ENCODE measurements at regions of chr14 and their contacts with region 1.

Region 1: DNA sequence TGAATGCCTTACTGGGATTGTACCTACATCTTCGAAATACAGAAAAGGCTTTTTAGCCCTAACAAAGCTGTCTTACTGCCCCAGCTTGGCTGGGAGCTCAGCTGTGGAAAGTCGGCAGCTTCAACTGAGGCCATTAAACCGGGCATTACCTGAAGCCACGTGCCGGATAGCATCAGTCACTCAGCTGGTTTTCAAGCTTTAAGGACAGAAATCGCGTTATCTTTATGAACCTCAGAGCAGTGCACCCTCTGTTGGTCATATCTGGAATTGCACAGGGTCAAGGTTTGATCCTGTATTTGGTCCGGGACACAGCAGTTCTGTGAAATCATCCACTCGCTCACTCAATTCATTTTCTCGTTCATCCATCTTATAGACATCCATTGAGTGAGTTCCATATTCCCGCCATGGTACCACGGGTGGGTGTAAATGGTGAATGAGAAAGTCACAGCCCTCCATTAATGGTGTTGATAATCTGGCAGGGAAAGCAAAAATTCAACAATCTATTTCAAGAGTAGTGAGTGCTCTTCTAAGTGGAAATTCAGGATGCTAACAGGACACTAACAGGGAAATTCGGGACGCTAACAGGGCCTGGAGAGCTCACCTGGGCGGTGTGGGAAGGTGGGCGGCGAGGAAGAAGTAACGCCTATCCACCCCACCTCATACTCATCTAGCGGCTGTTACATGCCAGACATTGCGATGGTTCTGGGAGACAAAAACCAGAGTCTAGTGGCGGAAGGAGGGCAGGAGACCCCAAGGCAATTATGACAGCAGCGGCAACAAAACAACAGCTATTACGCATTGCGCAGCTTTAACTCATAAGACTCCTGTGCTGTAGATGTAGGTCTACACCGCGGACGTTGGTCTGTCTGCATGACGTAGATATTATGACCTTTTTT is 60.6 kb upstream of the TCL1A start:
- DNase-seq: peak; percentile 71
- ATAC-seq: no peak
- H3K4me3 ChIP-seq: no peak overlapping the region
- H3K27ac ChIP-seq: no peak overlapping the region
- H3K4me1 ChIP-seq: no peaks in the 10 kb centered on the region
- H3K27me3 ChIP-seq: 0 out of 2 replicates have a peak, but pooled peaks cover 5% of the 10 kb centered on the region
- CTCF ChIP-seq: peak; percentile 82

Region 2: GRCh38 chr14:95424529-95424928 is 350.0 kb before region 1 on chr14:
- CTCF ChIA-PET with region 1: no interaction called
- POLR2A ChIA-PET with region 1: no interaction called
- intact Hi-C with region 1: loop called (anchors 10 kb)
- DNase-seq: no peak
- ATAC-seq: no peak
- H3K4me3 ChIP-seq: no peak overlapping the region
- H3K27ac ChIP-seq: no peak overlapping the region
- H3K4me1 ChIP-seq: no peaks in the 10 kb centered on the region
- H3K27me3 ChIP-seq: no peaks in the 10 kb centered on the region
- CTCF ChIP-seq: no peak

Region 3: DNA sequence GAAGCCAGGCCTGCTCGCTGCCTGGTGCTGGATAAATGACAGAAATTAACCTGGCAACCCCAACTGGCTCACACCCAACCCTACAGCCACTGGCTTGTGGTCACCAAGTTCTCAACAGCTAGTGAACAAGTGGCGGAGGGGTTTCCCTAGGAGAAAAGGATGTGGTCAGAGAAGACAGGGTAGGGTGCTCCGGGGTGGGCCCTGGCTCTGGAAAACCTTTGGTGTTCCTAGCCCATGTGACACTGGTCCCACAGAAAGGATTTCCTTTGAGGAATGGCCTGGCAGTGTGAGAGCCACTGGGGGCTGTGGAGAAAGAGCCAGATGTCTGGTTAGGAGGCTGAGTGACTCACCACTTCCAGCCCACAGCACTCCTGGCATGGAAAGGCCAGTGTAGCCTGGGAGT is 266.8 kb before region 1 on chr14:
- CTCF ChIA-PET with region 1: no interaction called
- POLR2A ChIA-PET with region 1: no interaction called
- intact Hi-C with region 1: no loop called
- DNase-seq: peak; percentile 78
- ATAC-seq: peak; percentile 84
- H3K4me3 ChIP-seq: peak overlapping the region; percentile 28; the same call in 1 of the 2 replicates
- H3K27ac ChIP-seq: peak overlapping the region; percentile 92
- H3K4me1 ChIP-seq: peaks cover 23% of the 10 kb centered on the region
- H3K27me3 ChIP-seq: no peaks in the 10 kb centered on the region
- CTCF ChIP-seq: no peak

Region 4: DNA sequence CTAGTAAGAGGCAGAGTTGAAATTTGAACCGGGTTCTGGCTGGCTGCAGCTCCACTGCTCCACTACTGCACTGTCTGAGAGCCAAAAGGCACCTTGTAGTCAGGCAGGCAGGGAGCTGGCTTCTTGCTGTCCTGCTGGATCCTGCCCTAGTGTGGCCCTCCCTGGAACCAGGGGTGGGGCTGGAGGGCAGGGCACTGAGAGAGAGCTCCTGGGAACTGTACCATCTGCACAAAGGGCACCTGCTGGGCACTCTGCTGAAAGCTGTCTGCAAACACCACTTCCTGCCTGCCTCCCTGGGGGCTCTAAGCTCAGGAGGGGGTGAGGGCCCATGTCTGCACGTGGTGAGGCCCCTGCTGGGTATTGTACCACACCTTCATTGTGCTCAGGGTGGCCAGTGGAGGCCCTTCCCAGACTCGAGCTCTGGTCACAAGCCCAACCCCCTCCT is 107.2 kb before region 1 on chr14:
- CTCF ChIA-PET with region 1: no interaction called
- POLR2A ChIA-PET with region 1: no interaction called
- intact Hi-C with region 1: no loop called
- DNase-seq: no peak
- ATAC-seq: no peak
- H3K4me3 ChIP-seq: no peak overlapping the region
- H3K27ac ChIP-seq: no peak overlapping the region
- H3K4me1 ChIP-seq: no peaks in the 10 kb centered on the region
- H3K27me3 ChIP-seq: peaks cover 43% of the 10 kb centered on the region
- CTCF ChIP-seq: no peak

Region 5: GRCh38 chr14:95697764-95698163 is 76.7 kb before region 1 on chr14:
- CTCF ChIA-PET with region 1: no interaction called
- POLR2A ChIA-PET with region 1: no interaction called
- intact Hi-C with region 1: no loop called
- DNase-seq: no peak
- ATAC-seq: no peak
- H3K4me3 ChIP-seq: no peak overlapping the region
- H3K27ac ChIP-seq: no peak overlapping the region
- H3K4me1 ChIP-seq: no peaks in the 10 kb centered on the region
- H3K27me3 ChIP-seq: peaks cover 44% of the 10 kb centered on the region
- CTCF ChIP-seq: no peak